Thyroid gland (tissue), 4 donors: ENCODE measurements at regions of chr5 and their contacts with region 1.

Region 1: DNA sequence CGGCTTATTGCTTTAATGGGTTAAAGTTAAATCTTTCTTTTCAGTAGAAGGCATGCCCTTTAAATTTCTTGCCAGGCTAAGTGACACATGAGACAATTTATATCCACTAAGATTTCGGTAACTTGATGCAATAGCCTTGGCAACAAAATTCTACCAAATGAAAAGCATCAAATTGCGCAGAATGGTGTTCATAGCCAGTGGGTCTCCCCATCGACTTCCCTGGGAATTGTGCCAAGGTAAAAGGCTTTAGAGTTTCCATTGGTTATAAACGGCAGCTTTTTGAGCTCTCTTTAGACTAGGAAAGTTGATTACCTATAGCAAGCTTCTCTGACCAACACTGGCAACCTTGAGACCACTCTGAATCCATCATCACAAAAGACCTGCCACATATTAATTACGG is 358.4 kb downstream of the ARRDC3 start:
- DNase-seq: no peak
- H3K4me3 ChIP-seq: no peak overlapping the region
- H3K27ac ChIP-seq: no peak overlapping the region
- H3K4me1 ChIP-seq: peaks cover 0 to 24% of the 10 kb centered on the region in 2 donors
- H3K27me3 ChIP-seq: no peaks in the 10 kb centered on the region
- CTCF ChIP-seq: no peak
- POLR2A ChIP-seq: no peak

Region 2: GRCh38 chr5:91074615-91075014 is 49.9 kb after region 1 on chr5:
- intact Hi-C with region 1: loop called (anchors 10 kb)
- DNase-seq: no peak
- H3K4me3 ChIP-seq: no peak overlapping the region
- H3K27ac ChIP-seq: no peak overlapping the region
- H3K4me1 ChIP-seq: peaks cover 44 to 52% of the 10 kb centered on the region in 2 donors
- H3K27me3 ChIP-seq: no peaks in the 10 kb centered on the region
- CTCF ChIP-seq: peak in 1 of 6 experiments; percentile 18
- POLR2A ChIP-seq: no peak